MCF 10A (cell line): ENCODE measurements at regions of chr10 and their contacts with region 1.

Region 1: DNA sequence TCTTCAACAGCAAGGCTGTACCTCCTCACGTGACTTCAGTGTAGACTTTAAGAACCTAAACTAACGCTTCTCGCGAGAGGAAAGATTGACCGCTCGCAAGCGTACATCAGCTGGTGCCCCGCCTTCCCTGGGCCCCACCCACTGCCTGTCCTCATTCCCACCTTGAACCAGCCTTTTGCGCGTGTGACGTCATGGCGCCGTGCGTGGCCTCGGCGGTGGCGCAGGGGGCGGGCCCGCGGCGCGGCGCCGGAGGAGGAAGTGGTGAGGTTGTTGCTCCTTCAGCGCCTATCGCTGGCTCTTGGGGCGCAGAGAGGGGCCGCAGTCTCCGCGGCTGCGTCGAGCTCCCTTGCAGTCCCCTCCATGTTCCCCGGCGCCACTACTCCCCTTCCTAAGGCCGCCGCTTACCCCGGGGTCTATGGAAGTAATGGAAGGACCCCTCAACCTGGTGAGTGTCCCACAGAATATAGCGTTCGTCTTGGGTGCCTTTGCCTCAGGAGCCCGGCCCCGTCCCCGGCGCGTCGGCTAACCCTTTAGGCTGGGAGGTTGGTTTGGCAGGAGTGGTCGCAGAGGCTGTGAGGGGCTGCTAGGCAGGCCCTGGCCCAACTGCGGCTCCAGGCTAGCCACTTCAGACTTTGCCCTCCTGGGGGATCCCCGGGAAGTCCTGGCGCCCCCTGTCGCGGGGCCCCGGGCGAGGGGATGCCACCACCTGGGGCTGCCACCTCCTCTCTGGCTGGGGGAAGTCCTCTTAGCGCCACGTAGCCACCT is at the start of gene NRBF2:
- DNase-seq: peak; percentile 98
- H3K4me3 Mint-ChIP-seq: peak within 1 kb of the TSS; percentile 86
- H3K27ac Mint-ChIP-seq: peak within 1 kb of the TSS; percentile 86
- H3K4me1 Mint-ChIP-seq: peaks cover 6% of the 10 kb centered on the region
- H3K27me3 Mint-ChIP-seq: no peaks in the 10 kb centered on the region
- CTCF ChIP-seq: peak; percentile 18
- total RNA-seq, gene NRBF2: 44.9 and 56.9 TPM in 2 replicates

Region 2: GRCh38 chr10:63115732-63116383 is 17.4 kb before region 1 on chr10:
- CTCF ChIA-PET with region 1: interaction called, 10 read pairs
- POLR2A ChIA-PET with region 1: interaction called, 154 read pairs
- intact Hi-C with region 1: loop called (anchors 1 kb)
- DNase-seq: peak; percentile 97
- H3K4me3 Mint-ChIP-seq: no peak overlapping the region
- H3K27ac Mint-ChIP-seq: peak overlapping the region; percentile 99
- H3K4me1 Mint-ChIP-seq: peaks cover 24% of the 10 kb centered on the region
- H3K27me3 Mint-ChIP-seq: no peaks in the 10 kb centered on the region
- CTCF ChIP-seq: no peak

Region 3: GRCh38 chr10:63145782-63146181 is 12.5 kb after region 1 on chr10:
- CTCF ChIA-PET with region 1: interaction called, 3 read pairs
- POLR2A ChIA-PET with region 1: interaction called, 30 read pairs
- intact Hi-C with region 1: no loop called
- DNase-seq: no peak
- H3K4me3 Mint-ChIP-seq: no peak overlapping the region
- H3K27ac Mint-ChIP-seq: peak overlapping the region; percentile 42
- H3K4me1 Mint-ChIP-seq: peaks cover 10% of the 10 kb centered on the region
- H3K27me3 Mint-ChIP-seq: no peaks in the 10 kb centered on the region
- CTCF ChIP-seq: no peak